GM10248 (cell line): ENCODE measurements at regions of chr16 and their contacts with region 1.

Region 1: GRCh38 chr16:74666425-74667254 is at the start of gene RFWD3:
- DNase-seq: peak; percentile 100
- CTCF ChIP-seq: no peak

Region 2: DNA sequence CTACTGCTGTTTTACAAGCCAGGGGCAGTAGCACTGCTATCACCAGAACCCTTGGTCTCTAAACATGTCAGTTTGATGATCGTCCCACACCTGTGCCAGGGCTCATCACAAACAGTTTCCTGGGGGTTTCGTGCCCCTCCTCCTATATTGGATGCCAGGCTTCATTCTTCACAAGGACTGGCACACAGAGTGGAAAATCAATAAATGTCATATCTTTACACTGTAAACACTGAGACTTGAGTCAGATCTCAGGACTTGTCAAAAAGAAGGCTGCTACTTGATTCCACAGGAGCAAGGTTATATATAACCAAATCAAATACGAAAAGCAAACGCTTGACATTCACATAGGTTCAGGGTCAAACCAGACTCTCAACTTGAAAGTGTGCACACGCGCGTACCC is 206.1 kb before region 1 on chr16:
- CTCF ChIA-PET with region 1: no interaction called
- POLR2A ChIA-PET with region 1: interaction called, 12 read pairs
- DNase-seq: no peak
- CTCF ChIP-seq: no peak